Sciatic nerve (tissue), 2 donors: ENCODE measurements at regions of chr1 and their contacts with region 1.

Region 1: GRCh38 chr1:175154629-175155472 is 37.7 kb downstream of the KIAA0040 start:
- DNase-seq: peak; percentile 83
- ATAC-seq: peak; percentile 75

Region 2: DNA sequence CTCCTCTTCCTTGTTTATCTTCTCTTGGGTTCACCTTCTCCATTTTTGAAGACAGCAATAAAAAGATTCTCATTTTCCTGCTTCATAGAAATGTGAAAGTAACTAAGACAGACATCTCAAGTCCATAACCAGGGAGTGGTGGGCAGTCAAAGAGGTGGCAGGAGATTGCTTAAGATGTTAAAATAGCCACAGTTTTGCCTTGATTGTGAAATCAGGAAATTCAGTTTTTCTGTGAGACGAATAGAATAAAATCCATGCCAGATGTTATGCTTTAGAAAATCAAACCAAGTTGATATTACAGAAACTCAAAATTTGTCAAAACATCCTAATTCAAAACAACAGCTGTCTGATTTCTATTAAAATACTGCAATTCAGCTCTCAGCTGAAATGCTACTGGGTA is 30.0 kb before region 1 on chr1:
- intact Hi-C with region 1: no loop called
- DNase-seq: no peak
- ATAC-seq: peak; percentile 74

Region 3: DNA sequence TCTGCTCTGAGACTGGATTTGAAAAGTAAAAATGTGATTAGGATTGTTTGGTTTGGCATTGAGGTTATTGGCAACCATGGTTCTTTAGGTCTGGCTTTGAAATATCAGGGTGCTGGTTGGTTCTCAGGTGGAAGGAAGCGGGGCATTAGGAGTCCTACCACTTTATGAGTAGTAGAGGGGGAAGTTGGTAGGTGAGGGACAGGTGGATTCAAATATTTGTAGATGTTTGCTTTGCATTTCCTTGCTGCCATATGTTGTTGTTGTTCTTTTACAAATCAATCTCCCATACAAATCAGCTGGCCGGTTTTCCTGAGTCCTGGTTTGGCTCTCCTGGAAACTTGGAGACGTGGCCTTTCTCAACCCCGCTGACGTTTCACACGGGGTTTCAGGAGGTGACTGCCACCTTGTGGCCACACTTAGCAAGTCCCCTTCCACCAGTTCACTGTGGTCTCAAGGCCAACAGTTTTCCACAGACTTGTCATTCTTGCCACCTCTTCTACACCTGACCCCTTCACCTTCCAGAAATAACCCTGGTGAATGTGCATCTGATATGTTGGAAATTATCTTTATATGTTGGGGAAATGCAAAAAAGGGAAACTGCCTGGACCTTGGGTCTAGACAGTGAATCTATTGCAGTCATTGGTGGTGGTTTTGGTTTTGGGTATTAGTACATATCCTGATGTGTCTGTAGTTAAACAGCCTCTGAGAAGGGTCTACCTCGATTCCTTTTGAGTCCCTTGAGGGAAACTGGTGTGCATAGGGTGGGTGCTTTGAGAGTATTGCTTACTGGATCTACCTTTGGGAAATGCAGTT is 164.8 kb after region 1 on chr1:
- intact Hi-C with region 1: loop called (anchors 5 kb)
- DNase-seq: peak; percentile 87
- ATAC-seq: peak; percentile 88